Natural killer cell (primary cell): ENCODE measurements at regions of chr6 and their contacts with region 1.

Region 1: DNA sequence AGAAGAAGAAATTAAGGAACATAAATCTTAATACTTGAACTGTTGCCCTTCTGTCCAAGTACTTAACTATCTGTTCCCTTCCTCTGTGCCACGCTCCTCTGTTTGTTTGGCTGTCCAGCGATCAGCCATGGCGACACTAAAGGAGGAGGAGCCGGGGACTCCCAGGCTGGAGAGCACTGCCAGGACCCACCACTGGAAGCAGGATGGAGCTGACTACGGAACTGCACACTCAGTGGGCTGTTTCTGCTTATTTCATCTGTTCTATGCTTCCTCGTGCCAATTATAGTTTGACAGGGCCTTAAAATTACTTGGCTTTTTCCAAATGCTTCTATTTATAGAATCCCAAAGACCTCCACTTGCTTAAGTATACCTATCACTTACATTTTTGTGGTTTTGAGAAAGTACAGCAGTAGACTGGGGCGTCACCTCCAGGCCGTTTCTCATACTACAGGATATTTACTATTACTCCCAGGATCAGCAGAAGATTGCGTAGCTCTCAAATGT is 17.1 kb downstream of the IRF4 start:
- DNase-seq: peak in 1 of 2 donors; percentile 40
- ATAC-seq: peak; percentile 50 to 79 (median 63)
- H3K4me3 ChIP-seq: no peak overlapping the region
- H3K4me3 Mint-ChIP-seq: no peak overlapping the region
- H3K27ac ChIP-seq: no peak overlapping the region
- H3K27ac Mint-ChIP-seq: peak overlapping the region in 1 of 2 donors; percentile 27
- H3K4me1 ChIP-seq: peaks cover 6% of the 10 kb centered on the region
- H3K4me1 Mint-ChIP-seq: peaks cover 0 to 5% of the 10 kb centered on the region in 2 donors
- H3K27me3 ChIP-seq: no peaks in the 10 kb centered on the region
- H3K27me3 Mint-ChIP-seq: peaks cover 7 to 8% of the 10 kb centered on the region in 2 donors
- CTCF ChIP-seq: peak; percentile 60

Region 2: DNA sequence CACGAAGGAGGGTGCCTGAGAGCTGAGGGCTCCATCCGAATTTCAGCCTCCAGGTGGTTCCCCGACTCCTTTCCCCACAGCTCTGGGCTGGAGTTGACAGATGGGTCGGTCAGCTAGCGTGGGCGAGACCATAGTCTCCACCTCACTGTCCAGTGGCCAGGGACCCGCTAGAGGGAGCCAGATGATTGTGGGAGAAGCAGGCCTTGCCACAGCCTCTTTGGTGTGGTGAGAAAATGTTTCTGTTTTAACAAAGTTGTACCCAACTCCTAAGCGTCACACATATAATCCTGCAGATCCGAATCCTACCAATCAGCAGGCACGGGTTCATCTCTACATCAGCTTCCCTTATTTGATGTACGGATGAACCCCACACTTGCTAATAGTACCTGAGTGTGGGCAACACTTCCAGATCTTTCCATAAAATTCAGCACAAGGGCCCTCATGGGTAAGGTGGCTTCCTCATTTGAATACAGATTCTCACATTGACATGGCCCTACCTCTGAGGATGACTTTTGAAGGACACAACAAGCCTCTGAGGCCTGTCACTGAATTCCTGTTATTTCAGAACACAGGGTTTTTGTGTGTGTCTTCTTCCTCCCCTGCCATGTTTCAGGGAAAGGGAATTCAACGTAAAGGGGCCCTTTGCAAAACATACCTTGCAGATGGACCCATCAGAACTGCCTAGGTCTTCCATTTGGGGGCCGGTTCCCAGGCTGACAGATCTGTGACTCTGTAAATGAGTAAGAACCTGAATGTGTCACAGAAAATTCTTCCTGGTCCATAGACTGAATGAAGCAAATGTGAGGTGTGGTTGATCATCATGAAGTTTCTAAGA is 219.6 kb before region 1 on chr6:
- intact Hi-C with region 1: loop called (anchors 1 kb)
- DNase-seq: peak; percentile 69 to 86
- ATAC-seq: peak; percentile 85 to 97 (median 89)
- H3K4me3 ChIP-seq: no peak overlapping the region
- H3K4me3 Mint-ChIP-seq: no peak overlapping the region
- H3K27ac ChIP-seq: no peak overlapping the region
- H3K27ac Mint-ChIP-seq: no peak overlapping the region
- H3K4me1 ChIP-seq: peaks cover 17% of the 10 kb centered on the region
- H3K4me1 Mint-ChIP-seq: peaks cover 4 to 28% of the 10 kb centered on the region in 2 donors
- H3K27me3 ChIP-seq: no peaks in the 10 kb centered on the region
- H3K27me3 Mint-ChIP-seq: no peaks in the 10 kb centered on the region
- CTCF ChIP-seq: peak; percentile 79